ENCODE measurements at regions of chr9 and their contacts with region 1.

Region 1: GRCh38 chr9:74952281-74953151 is at the start of gene C9orf40:
- DNase-seq: peak; percentile 92
- H3K4me3 Mint-ChIP-seq: peak within 1 kb of the TSS; percentile 91
- H3K27ac Mint-ChIP-seq: peak within 1 kb of the TSS; percentile 90
- H3K4me1 Mint-ChIP-seq: peaks cover 54% of the 10 kb centered on the region
- H3K27me3 Mint-ChIP-seq: no peaks in the 10 kb centered on the region
- total RNA-seq, gene C9orf40: 22.2 to 23.4 TPM

Region 2: GRCh38 chr9:74773886-74774479 is 178.5 kb before region 1 on chr9:
- CTCF ChIA-PET with region 1: interaction called, 55 read pairs
- POLR2A ChIA-PET with region 1: no interaction called
- DNase-seq: peak; percentile 76
- H3K4me3 Mint-ChIP-seq: no peak overlapping the region
- H3K27ac Mint-ChIP-seq: no peak overlapping the region
- H3K4me1 Mint-ChIP-seq: peaks cover 16% of the 10 kb centered on the region
- H3K27me3 Mint-ChIP-seq: peaks cover 13% of the 10 kb centered on the region

Region 3: DNA sequence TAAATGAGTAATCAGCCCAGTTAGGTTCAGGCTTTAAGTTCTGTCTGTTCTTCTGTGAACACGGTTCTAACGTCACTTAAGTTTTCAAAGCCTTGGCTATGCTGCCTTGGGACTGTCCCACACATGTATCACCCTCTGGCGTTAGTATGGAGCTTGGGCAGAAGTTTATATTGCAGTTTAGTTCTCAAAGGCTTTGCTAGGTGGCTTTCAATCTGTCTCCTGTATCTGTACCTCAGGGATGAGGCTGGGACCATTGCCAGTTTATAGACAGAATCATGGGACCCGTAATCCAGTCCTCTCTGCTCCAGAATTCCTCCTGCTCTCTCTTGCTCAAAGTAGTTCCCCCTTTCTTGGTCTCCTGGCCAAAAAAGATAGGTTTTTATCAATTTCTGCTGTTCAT is 11.9 kb before region 1 on chr9:
- CTCF ChIA-PET with region 1: interaction called, 11 read pairs
- POLR2A ChIA-PET with region 1: interaction called, 21 read pairs
- DNase-seq: no peak
- H3K4me3 Mint-ChIP-seq: no peak overlapping the region
- H3K27ac Mint-ChIP-seq: no peak overlapping the region
- H3K4me1 Mint-ChIP-seq: peaks cover 14% of the 10 kb centered on the region
- H3K27me3 Mint-ChIP-seq: peaks cover 8% of the 10 kb centered on the region

Region 4: DNA sequence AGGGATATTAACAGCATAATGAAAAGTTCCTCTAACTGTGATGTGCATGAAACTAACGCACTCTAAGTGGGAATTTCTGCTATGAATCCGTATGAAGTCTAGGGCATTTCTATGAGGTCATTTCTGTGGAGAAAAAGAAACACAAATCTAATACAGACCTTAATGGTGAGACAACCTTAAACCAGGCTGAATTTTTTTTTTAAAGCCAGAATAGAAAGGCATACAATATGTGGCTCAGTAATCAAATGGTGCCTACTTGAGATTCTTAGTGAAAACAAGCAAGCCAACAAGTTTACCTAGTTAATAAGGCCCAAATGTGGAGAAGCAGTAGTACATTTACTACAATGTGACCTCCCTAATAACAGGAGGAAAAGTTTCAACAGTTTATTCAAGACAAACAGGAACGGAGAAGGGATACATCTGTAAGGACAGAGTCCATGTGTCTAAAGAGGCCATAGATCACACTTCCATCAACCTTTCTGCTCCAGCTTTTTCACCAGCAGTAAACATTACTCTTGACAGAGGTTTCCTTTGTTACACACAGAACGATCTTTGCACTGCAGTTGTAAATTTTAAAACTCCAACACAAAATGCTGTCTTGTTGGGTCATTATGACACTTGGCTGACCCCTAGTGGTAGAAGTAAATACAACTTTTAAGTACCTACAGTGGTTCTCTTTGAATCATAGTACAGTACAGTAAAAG is 49.4 kb after region 1 on chr9:
- CTCF ChIA-PET with region 1: interaction called, 7 read pairs
- POLR2A ChIA-PET with region 1: interaction called, 10 read pairs
- DNase-seq: no peak
- H3K4me3 Mint-ChIP-seq: no peak overlapping the region
- H3K27ac Mint-ChIP-seq: no peak overlapping the region
- H3K4me1 Mint-ChIP-seq: peaks cover 1% of the 10 kb centered on the region
- H3K27me3 Mint-ChIP-seq: no peaks in the 10 kb centered on the region

Region 5: DNA sequence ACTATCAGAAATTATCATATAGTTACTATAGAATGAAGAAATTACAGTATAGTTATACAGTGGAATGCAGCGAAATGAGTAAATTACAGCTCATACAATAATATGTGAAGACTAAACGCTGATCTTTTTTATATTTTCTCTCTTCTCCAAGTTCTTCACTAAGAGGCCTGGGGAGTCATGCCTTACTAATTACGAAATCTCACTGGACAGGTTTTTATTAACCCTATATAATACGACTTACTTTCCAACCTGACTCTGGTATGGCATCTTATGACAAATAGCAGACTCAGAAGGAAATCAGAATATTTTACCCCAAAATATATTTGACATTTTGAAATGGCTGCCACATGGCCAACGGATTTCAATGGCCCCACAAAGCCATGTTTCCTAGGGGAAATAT is 66.5 kb after region 1 on chr9:
- CTCF ChIA-PET with region 1: interaction called, 4 read pairs
- POLR2A ChIA-PET with region 1: interaction called, 87 read pairs
- DNase-seq: no peak
- H3K4me3 Mint-ChIP-seq: no peak overlapping the region
- H3K27ac Mint-ChIP-seq: no peak overlapping the region
- H3K4me1 Mint-ChIP-seq: peaks cover 36% of the 10 kb centered on the region
- H3K27me3 Mint-ChIP-seq: no peaks in the 10 kb centered on the region

Region 6: DNA sequence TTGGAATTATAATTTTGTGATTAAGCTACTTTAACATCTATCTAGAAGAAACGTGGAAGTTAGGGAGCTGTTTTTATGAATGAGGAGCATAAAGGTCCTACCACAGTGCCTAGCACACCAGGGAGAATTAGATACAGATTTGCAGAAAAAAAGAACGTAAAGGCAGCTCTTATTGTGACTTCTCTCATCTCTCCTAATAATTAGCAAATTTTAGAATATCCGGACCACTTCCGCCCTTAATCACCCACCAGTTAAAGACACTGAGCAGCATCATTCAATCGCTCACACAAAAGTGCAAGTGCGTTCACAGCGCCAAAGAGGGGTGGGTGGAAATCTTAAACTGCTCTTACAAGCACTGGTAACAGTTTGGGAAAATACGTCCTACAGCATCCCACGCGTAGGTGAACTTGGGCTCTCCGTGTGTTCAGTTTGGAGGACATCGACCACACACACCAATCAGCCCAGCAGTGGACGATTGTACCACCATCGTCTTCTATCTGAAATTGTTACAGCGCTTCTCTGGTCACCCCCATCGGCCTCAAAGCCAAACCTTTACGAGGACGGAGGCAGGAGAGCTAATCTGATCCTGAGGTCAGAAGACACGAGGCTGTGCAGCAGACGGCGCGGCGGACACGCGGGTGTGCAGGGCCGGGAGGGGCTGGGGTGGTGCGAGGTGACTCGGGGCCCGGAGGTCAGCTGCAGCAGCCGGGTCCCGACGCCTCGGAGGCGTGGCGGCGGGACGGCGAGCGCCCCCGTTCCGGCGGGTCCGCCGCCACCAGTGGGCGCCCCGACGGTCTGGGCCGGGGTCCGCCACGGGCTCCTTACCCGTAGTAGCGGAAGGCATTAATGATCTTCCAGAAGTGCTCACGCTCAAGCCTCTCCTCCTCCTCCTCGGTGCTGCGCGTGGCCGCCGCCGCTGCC is 74.9 kb after region 1 on chr9:
- CTCF ChIA-PET with region 1: interaction called, 25 read pairs
- POLR2A ChIA-PET with region 1: interaction called, 87 read pairs
- DNase-seq: peak; percentile 59
- H3K4me3 Mint-ChIP-seq: peak overlapping the region; percentile 98
- H3K27ac Mint-ChIP-seq: peak overlapping the region; percentile 97
- H3K4me1 Mint-ChIP-seq: peaks cover 44% of the 10 kb centered on the region
- H3K27me3 Mint-ChIP-seq: peaks cover 1% of the 10 kb centered on the region

Region 7: DNA sequence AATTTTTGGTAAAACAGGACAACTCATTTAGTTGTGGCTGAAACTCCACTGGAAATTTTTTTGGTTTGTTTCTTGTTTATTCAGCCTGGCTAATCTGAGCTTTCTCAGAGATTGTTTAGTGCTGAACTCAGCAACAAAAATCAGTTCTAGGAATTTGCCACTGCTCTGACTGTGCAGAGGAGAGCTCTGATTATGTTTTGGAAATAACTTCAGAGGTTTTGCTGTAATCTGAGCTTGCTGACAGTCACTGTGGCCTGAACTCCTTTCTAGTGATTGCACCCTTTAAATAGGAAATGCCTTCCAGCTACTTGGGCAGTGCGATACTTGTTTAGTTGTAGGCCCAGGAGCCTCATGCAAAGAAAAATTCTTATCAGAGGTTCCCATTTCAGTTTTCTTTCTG is 196.0 kb after region 1 on chr9:
- CTCF ChIA-PET with region 1: interaction called, 6 read pairs
- POLR2A ChIA-PET with region 1: interaction called, 14 read pairs
- DNase-seq: peak; percentile 56
- H3K4me3 Mint-ChIP-seq: peak overlapping the region; percentile 9
- H3K27ac Mint-ChIP-seq: peak overlapping the region; percentile 91
- H3K4me1 Mint-ChIP-seq: peaks cover 88% of the 10 kb centered on the region
- H3K27me3 Mint-ChIP-seq: no peaks in the 10 kb centered on the region

Measured in activated CD4-positive, alpha-beta memory T cell treated with anti-CD3 and anti-CD28 coated beads, Interleukin-2, amount 10 ng/mL, durations not matched to agents 7 days and 5 days (primary cell).